ENCODE measurements at regions of chr10 and their contacts with region 1.

Region 1: DNA sequence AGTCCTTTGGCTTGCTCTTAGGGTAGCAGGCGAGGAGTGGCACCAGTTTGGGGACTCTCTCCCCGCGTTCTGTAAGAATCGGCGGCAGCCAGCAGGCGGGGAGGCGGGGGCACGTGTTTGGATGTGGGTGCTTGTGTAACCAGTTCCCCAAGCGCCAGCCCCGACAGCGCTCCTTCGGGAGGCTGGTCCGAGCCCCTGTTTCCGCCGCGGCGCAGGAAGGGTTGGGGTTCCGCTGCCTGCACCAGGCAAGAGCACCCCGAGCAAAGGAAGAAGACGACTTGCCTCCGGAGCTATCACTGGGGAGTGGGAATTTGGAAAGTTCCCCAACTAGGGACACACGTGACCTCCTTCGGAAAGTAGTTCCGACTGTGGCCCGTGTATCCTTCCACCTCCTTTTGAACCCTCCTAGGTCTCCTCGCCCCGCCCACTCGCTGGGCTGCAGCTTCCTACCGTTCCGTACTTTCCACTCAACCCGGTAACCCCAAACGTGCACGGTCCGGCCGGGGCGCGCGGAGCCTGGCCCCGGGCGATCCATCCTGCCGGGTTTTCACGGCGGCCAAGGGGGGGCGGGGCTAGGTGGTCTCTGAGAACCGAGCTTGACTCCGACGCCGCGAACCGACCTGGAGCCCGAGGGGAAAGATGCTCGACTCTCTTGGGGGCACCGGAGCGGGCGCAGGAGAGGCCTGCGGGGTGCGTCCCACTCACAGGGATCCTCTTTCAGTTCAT is 1.2 kb downstream of the KLLN start:
- DNase-seq: peak; percentile 96
- ATAC-seq: peak; percentile 66
- H3K4me3 Mint-ChIP-seq: peak overlapping the region; percentile 91
- H3K27ac Mint-ChIP-seq: peak overlapping the region; percentile 92
- H3K4me1 Mint-ChIP-seq: peaks cover 30% of the 10 kb centered on the region
- H3K27me3 Mint-ChIP-seq: no peaks in the 10 kb centered on the region

Region 2: GRCh38 chr10:87817609-87818504 is 44.3 kb before region 1 on chr10 and contains the start of gene ATAD1:
- CTCF ChIA-PET with region 1: interaction called, 12 read pairs
- POLR2A ChIA-PET with region 1: interaction called, 17 read pairs
- intact Hi-C with region 1: loop called (anchors 1 kb)
- DNase-seq: peak; percentile 93
- ATAC-seq: peak; percentile 88
- H3K4me3 Mint-ChIP-seq: peak within 1 kb of the TSS; percentile 89
- H3K27ac Mint-ChIP-seq: peak within 1 kb of the TSS; percentile 94
- H3K4me1 Mint-ChIP-seq: peaks cover 30% of the 10 kb centered on the region
- H3K27me3 Mint-ChIP-seq: no peaks in the 10 kb centered on the region
- total RNA-seq, gene ATAD1: 34.2 to 46.8 TPM

Region 3: GRCh38 chr10:88064608-88065382 is 202.7 kb after region 1 on chr10:
- CTCF ChIA-PET with region 1: interaction called, 3 read pairs
- POLR2A ChIA-PET with region 1: interaction called, 3 read pairs
- intact Hi-C with region 1: loop called (anchors 2 kb)
- DNase-seq: peak; percentile 52
- ATAC-seq: peak; percentile 49
- H3K4me3 Mint-ChIP-seq: no peak overlapping the region
- H3K27ac Mint-ChIP-seq: no peak overlapping the region
- H3K4me1 Mint-ChIP-seq: peaks cover 69% of the 10 kb centered on the region
- H3K27me3 Mint-ChIP-seq: peaks cover 24% of the 10 kb centered on the region

Region 4: DNA sequence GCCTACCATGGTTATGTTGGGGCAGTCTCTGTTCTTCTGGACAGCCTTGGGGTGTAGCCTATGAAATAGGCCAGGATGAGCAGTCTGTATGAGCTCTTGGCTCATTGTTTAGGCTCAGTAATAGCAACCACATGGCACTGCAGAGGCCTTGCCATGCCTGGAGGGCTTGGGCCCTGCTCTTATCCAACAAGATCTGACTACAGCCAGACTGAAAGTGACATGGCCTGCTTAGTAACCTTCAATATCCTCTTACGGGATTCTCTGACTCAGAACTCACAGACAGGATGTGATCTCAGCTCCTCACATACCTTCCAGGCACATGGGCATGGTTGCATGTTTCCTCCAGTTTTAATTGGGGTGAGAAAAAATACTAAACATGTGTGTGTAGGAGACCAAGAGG is 290.6 kb after region 1 on chr10:
- CTCF ChIA-PET with region 1: no interaction called
- POLR2A ChIA-PET with region 1: no interaction called
- intact Hi-C with region 1: loop called in 1 of 2 experiments (anchors 1 kb)
- DNase-seq: peak; percentile 75
- ATAC-seq: peak; percentile 100
- H3K4me3 Mint-ChIP-seq: no peak overlapping the region
- H3K27ac Mint-ChIP-seq: peak overlapping the region; percentile 87
- H3K4me1 Mint-ChIP-seq: peaks cover 20% of the 10 kb centered on the region
- H3K27me3 Mint-ChIP-seq: peaks cover 2% of the 10 kb centered on the region

Region 5: DNA sequence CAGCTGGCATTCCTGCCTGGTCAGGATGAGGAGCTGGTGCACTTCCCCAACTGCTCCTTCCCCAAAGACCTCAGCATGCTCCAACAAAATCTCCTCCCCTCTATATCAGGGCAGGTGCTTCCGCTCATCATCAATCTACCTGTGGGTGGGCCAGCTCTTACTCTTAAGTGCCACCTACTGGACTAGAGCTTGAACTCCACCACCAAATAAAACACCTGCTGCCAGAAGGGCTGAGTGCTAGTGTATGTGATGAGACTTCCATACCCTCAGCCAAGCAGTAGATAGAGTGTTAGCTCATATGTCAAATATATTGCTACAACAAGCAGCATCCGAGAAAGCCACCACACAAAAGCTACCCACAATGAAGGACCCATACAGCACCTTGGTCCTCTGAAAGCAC is 456.7 kb after region 1 on chr10:
- CTCF ChIA-PET with region 1: no interaction called
- POLR2A ChIA-PET with region 1: no interaction called
- intact Hi-C with region 1: loop called in 1 of 2 experiments (anchors 1 kb)
- DNase-seq: peak; percentile 28
- ATAC-seq: peak; percentile 39
- H3K4me3 Mint-ChIP-seq: no peak overlapping the region
- H3K27ac Mint-ChIP-seq: no peak overlapping the region
- H3K4me1 Mint-ChIP-seq: peaks cover 3% of the 10 kb centered on the region
- H3K27me3 Mint-ChIP-seq: no peaks in the 10 kb centered on the region

Region 6: GRCh38 chr10:88553116-88553752 is 691.1 kb after region 1 on chr10:
- CTCF ChIA-PET with region 1: interaction called, 3 read pairs
- POLR2A ChIA-PET with region 1: no interaction called
- intact Hi-C with region 1: loop called in 1 of 2 experiments (anchors 2 kb)
- DNase-seq: peak; percentile 55
- ATAC-seq: peak; percentile 91
- H3K4me3 Mint-ChIP-seq: no peak overlapping the region
- H3K27ac Mint-ChIP-seq: no peak overlapping the region
- H3K4me1 Mint-ChIP-seq: peaks cover 13% of the 10 kb centered on the region
- H3K27me3 Mint-ChIP-seq: no peaks in the 10 kb centered on the region

Measured in activated CD4-positive, alpha-beta T cell treated with anti-CD3 and anti-CD28 coated beads for 36 hours (primary cell).